Naive thymus-derived CD4-positive, alpha-beta T cell (primary cell): ENCODE measurements at regions of chr11 and their contacts with region 1.

Region 1: GRCh38 chr11:62556108-62556871 is 9.7 kb upstream of the AHNAK start:
- DNase-seq: peak; percentile 58 to 82 (median 72)
- ATAC-seq: peak; percentile 48
- H3K4me3 ChIP-seq: peak overlapping the region; percentile 42
- H3K4me3 Mint-ChIP-seq: peak overlapping the region; percentile 65 to 87 (median 78)
- H3K27ac ChIP-seq: peak overlapping the region; percentile 87
- H3K27ac Mint-ChIP-seq: peak overlapping the region; percentile 87 to 100 (median 98)
- H3K4me1 ChIP-seq: peaks cover 69 to 84% of the 10 kb centered on the region in 2 donors
- H3K4me1 Mint-ChIP-seq: peaks cover 62 to 88% (median 81%) of the 10 kb centered on the region in 7 donors
- H3K27me3 ChIP-seq: no peaks in the 10 kb centered on the region
- H3K27me3 Mint-ChIP-seq: peaks cover 0 to 2% (median 0%) of the 10 kb centered on the region in 5 donors

Region 2: GRCh38 chr11:61588454-61589191 is 967.7 kb before region 1 on chr11:
- CTCF ChIA-PET with region 1: no interaction called
- POLR2A ChIA-PET with region 1: no interaction called
- intact Hi-C with region 1: no loop called
- DNase-seq: no peak
- ATAC-seq: no peak
- H3K4me3 ChIP-seq: peak overlapping the region; percentile 58
- H3K4me3 Mint-ChIP-seq: peak overlapping the region; percentile 50 to 87 (median 82)
- H3K27ac ChIP-seq: no peak overlapping the region
- H3K27ac Mint-ChIP-seq: no peak overlapping the region
- H3K4me1 ChIP-seq: peaks cover 0 to 11% of the 10 kb centered on the region in 2 donors
- H3K4me1 Mint-ChIP-seq: peaks cover 7 to 19% (median 13%) of the 10 kb centered on the region in 7 donors
- H3K27me3 ChIP-seq: no peaks in the 10 kb centered on the region
- H3K27me3 Mint-ChIP-seq: peaks cover 12 to 62% (median 25%) of the 10 kb centered on the region in 5 donors

Region 3: GRCh38 chr11:61967116-61967923 is 589.0 kb before region 1 on chr11 and contains the start of gene FTH1:
- CTCF ChIA-PET with region 1: no interaction called
- POLR2A ChIA-PET with region 1: no interaction called
- intact Hi-C with region 1: loop called in 1 of 2 experiments (anchors 10 kb)
- DNase-seq: peak; percentile 87 to 96 (median 92)
- ATAC-seq: peak; percentile 81
- H3K4me3 ChIP-seq: peak within 1 kb of the TSS; percentile 91
- H3K4me3 Mint-ChIP-seq: peak within 1 kb of the TSS; percentile 90 to 98 (median 94)
- H3K27ac ChIP-seq: peak within 1 kb of the TSS; percentile 87
- H3K27ac Mint-ChIP-seq: peak within 1 kb of the TSS; percentile 91 to 99 (median 97)
- H3K4me1 ChIP-seq: peaks cover 18 to 38% of the 10 kb centered on the region in 2 donors
- H3K4me1 Mint-ChIP-seq: peaks cover 45 to 78% (median 72%) of the 10 kb centered on the region in 7 donors
- H3K27me3 ChIP-seq: no peaks in the 10 kb centered on the region
- H3K27me3 Mint-ChIP-seq: no peaks in the 10 kb centered on the region
- total RNA-seq, gene FTH1: 684 to 3,858 (median 993) TPM

Region 4: DNA sequence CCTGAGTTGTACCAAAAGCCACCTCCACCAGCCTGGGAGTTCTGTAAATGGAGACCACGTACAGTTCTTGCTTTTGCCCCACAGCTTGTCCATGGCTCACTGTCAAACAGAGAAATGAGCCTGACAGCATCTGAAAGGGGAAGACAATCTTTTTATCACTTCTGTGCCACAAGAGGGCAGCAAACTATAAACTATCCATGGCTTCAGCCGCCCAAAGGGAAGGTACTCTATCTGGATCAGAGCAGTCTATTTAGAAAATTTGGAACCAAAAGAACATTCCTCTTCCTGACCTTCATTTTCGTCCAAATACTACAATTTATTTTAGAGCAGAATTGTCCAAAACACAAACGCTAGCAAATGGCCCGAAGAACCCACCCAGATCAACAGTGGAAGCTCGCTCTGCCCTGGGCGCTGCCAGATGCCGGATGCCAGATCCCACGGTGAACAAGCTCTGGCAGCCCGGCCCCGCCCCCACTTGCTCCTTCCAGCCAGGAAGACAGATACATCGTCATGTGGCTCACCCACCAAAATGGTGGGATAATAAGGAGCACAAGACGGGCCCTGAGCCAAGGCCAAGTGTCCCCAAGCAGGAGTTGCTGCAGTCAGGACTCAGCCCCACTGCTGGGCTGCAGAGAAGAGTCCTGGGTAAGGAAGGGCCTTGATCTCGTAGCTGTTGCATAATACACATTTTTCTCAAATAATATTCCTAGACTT is 161.3 kb before region 1 on chr11:
- CTCF ChIA-PET with region 1: interaction called, 22 read pairs
- POLR2A ChIA-PET with region 1: interaction called, 20 read pairs
- intact Hi-C with region 1: loop called (anchors 1 kb)
- DNase-seq: peak in 7 of 9 donors; percentile 37 to 66 (median 54)
- ATAC-seq: peak; percentile 85
- H3K4me3 ChIP-seq: no peak overlapping the region
- H3K4me3 Mint-ChIP-seq: no peak overlapping the region
- H3K27ac ChIP-seq: no peak overlapping the region
- H3K27ac Mint-ChIP-seq: peak overlapping the region in 3 of 9 donors; percentile 23 to 74 (median 65)
- H3K4me1 ChIP-seq: peaks cover 0 to 13% of the 10 kb centered on the region in 2 donors
- H3K4me1 Mint-ChIP-seq: peaks cover 11 to 34% (median 22%) of the 10 kb centered on the region in 7 donors
- H3K27me3 ChIP-seq: no peaks in the 10 kb centered on the region
- H3K27me3 Mint-ChIP-seq: no peaks in the 10 kb centered on the region

Region 5: GRCh38 chr11:62427630-62428233 is 128.6 kb before region 1 on chr11:
- CTCF ChIA-PET with region 1: interaction called, 125 read pairs
- POLR2A ChIA-PET with region 1: interaction called, 6 read pairs
- intact Hi-C with region 1: loop called (anchors 1 kb)
- DNase-seq: peak in 1 of 9 donors; percentile 34
- ATAC-seq: peak; percentile 54
- H3K4me3 ChIP-seq: no peak overlapping the region
- H3K4me3 Mint-ChIP-seq: peak overlapping the region in 3 of 10 donors; percentile 19 to 61 (median 43)
- H3K27ac ChIP-seq: no peak overlapping the region
- H3K27ac Mint-ChIP-seq: peak overlapping the region in 6 of 9 donors; percentile 26 to 91 (median 87)
- H3K4me1 ChIP-seq: peaks cover 19 to 24% of the 10 kb centered on the region in 2 donors
- H3K4me1 Mint-ChIP-seq: peaks cover 24 to 65% (median 32%) of the 10 kb centered on the region in 7 donors
- H3K27me3 ChIP-seq: no peaks in the 10 kb centered on the region
- H3K27me3 Mint-ChIP-seq: peaks cover 0 to 5% (median 0%) of the 10 kb centered on the region in 5 donors

Region 6: DNA sequence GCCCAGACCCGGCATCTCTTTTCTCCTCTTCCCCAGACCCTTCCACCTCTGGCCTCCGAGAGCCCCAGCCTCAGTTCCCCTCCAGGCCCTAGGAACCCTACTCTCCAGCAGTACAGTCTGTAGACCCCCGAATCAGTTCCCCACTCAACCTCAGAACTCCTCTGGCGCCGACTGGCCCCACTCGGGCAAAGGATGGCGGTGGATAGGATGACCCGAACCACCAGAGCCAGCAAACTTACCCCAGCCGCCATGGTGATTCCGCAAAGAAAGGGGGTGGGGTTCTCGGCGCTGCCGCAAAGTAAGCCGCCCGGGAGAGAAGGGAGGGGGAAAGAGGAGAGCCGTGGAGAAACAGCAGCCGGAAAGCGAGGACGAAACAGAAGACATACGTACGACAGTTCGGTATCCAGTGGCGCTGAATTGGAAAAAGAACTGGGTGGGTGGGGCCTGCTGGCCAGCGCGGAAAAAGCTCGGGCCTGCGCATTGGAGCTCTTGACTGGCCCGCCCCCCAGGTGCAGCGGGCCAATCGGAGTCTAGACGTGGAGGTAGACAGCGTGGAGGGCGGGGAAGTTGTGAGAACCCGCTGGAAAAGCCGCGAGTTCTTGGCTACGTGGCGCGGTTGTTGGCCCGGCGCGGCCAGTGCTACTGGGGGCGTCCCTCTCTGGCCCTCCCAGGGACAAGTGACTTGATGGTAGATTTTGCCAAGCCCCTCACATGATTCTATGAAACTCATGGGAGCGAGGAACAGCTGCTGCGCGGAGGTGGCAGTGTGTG is 17.5 kb after region 1 on chr11 and contains the start of gene EEF1G:
- CTCF ChIA-PET with region 1: interaction called, 9 read pairs
- POLR2A ChIA-PET with region 1: interaction called, 92 read pairs
- intact Hi-C with region 1: loop called (anchors 1 kb)
- DNase-seq: peak; percentile 88 to 100 (median 99)
- ATAC-seq: peak; percentile 96
- H3K4me3 ChIP-seq: peak within 1 kb of the TSS; percentile 82
- H3K4me3 Mint-ChIP-seq: peak within 1 kb of the TSS; percentile 94 to 100 (median 97)
- H3K27ac ChIP-seq: peak within 1 kb of the TSS; percentile 88
- H3K27ac Mint-ChIP-seq: peak within 1 kb of the TSS; percentile 81 to 98 (median 95)
- H3K4me1 ChIP-seq: peaks cover 8 to 11% of the 10 kb centered on the region in 2 donors
- H3K4me1 Mint-ChIP-seq: peaks cover 39 to 61% (median 45%) of the 10 kb centered on the region in 7 donors
- H3K27me3 ChIP-seq: no peaks in the 10 kb centered on the region
- H3K27me3 Mint-ChIP-seq: no peaks in the 10 kb centered on the region
- total RNA-seq, gene EEF1G: 1,186 to 2,550 (median 2,338) TPM

Region 7: DNA sequence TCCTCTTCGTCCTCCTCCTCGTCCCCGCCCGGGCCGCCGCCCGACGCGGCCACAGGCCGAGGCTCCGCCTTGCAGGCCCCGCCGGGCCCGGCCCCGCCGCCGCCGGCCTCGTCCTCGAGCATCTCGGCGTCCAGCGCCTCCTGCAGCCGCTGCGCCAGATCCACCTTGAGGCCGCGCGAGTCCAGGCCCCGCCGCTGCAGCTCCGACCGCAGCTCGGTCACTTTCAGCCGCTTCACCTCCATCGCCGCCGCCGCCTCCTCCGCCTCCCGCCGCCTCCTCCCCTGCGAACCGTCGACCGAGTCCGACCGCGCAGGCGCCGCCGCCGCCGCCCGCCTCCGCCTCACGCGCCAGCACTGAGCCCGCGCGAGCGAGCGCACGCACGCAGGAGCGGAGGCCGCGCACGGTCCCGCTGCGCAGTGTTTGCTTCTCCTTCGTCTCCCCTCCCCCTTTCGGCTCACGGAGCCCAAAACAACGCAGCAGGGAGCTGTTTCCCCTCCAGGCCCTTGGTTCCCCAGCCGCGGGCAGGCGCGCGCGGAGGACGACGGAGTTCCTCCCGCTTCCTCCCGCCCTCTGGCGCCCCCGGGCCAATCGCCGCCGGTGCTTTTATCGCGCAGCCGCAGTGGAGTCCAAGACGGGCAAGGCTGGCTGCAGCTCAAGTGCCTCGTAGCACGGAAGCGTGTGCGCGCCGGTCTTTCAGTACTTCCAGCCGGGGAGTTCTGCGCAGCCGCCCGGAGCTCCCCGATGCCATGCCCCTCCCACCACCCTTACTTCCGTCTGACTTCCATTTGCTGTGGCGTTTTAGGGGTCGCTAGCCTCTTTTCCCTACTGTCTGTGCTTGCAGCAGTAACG is 170.8 kb after region 1 on chr11 and contains the start of gene HNRNPUL2:
- CTCF ChIA-PET with region 1: no interaction called
- POLR2A ChIA-PET with region 1: interaction called, 7 read pairs
- intact Hi-C with region 1: loop called in 1 of 2 experiments (anchors 1 kb)
- DNase-seq: peak; percentile 96 to 100 (median 99)
- ATAC-seq: peak; percentile 89
- H3K4me3 ChIP-seq: peak within 1 kb of the TSS; percentile 87
- H3K4me3 Mint-ChIP-seq: peak within 1 kb of the TSS; percentile 91 to 99 (median 96)
- H3K27ac ChIP-seq: peak within 1 kb of the TSS; percentile 92
- H3K27ac Mint-ChIP-seq: peak within 1 kb of the TSS; percentile 95 to 100 (median 98)
- H3K4me1 ChIP-seq: peaks cover 36 to 38% of the 10 kb centered on the region in 2 donors
- H3K4me1 Mint-ChIP-seq: peaks cover 23 to 65% (median 58%) of the 10 kb centered on the region in 7 donors
- H3K27me3 ChIP-seq: no peaks in the 10 kb centered on the region
- H3K27me3 Mint-ChIP-seq: peaks cover 0 to 2% (median 0%) of the 10 kb centered on the region in 5 donors
- total RNA-seq, gene HNRNPUL2: 43.4 to 77.5 (median 65.3) TPM